Natural killer cell (primary cell): ENCODE measurements at regions of chr9 and their contacts with region 1.

Region 1: DNA sequence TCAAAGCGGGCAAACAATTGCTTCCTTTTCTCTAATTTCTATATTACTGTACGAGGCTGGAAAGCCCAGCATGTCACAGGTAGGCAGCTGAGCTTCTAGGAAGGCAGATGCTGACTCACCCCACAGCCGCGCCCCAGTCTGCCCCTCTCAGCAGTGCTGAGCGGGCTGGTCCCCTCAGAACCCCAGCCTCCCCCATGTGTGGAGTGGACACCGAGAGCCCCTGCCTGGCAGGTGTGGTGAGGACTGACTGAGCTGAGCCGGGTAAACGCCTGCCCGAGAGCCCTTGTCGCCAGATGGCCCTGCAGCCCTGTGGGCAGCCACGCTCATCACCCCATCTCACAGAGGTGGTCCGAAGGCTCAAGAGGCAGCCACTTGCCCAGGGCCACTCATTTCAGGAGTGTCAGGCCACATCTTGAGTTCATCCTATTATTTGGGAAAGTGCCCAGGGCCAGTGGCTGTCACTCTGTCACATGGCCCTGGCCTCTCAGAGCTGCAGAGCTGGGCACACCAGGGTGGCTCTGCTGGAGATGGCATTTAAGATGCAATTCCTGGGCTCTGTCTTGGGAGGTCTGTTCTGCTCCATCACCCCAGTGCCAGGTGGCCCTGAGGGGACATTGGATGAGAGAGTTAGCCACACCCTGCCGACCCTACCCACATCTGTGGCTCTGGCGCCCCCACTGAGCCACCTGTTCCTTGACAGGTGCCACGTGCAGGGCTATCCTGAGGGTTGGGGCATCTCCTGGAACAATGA is 12.4 kb downstream of the CARD19 start:
- DNase-seq: no peak
- ATAC-seq: no peak
- H3K4me3 ChIP-seq: no peak overlapping the region
- H3K4me3 Mint-ChIP-seq: no peak overlapping the region
- H3K27ac ChIP-seq: no peak overlapping the region
- H3K27ac Mint-ChIP-seq: peak overlapping the region in 1 of 2 donors; percentile 49
- H3K4me1 ChIP-seq: peaks cover 49% of the 10 kb centered on the region
- H3K4me1 Mint-ChIP-seq: peaks cover 6 to 11% of the 10 kb centered on the region in 2 donors
- H3K27me3 ChIP-seq: no peaks in the 10 kb centered on the region
- H3K27me3 Mint-ChIP-seq: no peaks in the 10 kb centered on the region
- CTCF ChIP-seq: no peak

Region 2: DNA sequence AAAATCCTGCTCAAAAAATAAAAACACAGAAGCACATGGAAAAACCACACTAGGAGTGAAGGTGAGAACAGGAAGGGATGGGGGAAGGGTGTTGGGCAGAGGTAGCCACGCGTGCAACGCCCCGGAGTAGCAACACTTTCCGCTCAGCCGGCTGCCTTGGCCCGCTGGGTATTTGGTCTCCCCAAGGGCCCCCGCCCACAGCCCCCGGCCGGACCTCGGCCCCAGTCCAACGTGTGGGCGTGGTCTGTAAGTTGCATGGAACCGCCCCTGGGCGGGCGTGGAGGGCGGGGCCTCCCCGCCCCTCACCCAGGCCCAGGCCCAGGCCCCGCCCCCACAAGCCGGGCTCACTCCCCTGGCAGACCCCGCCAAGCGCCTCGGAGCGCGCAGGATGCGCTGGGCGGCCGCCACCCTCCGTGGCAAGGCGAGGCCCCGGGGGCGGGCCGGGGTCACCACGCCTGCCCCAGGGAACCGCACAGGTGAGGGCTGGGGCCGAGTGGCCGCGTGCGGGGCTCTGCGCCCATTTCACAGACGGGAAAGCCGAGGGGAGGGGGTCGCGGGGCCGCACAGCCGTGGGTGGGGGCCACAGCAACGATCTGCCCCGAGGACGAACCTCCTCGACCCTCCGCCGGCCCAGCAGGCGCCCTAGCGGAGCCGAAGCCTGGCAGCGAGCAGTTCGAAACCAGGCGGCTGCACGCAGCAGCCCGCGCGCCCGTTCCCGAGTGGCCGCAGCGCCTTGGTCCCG is 49.9 kb before region 1 on chr9 and contains the start of gene SUSD3:
- intact Hi-C with region 1: no loop called
- DNase-seq: peak in 1 of 2 donors; percentile 81
- ATAC-seq: peak; percentile 57 to 68 (median 67)
- H3K4me3 ChIP-seq: peak within 1 kb of the TSS; percentile 47
- H3K4me3 Mint-ChIP-seq: peak within 1 kb of the TSS; percentile 86
- H3K27ac ChIP-seq: peak within 1 kb of the TSS; percentile 58
- H3K27ac Mint-ChIP-seq: peak within 1 kb of the TSS; percentile 29 to 71
- H3K4me1 ChIP-seq: peaks cover 61% of the 10 kb centered on the region
- H3K4me1 Mint-ChIP-seq: peaks cover 26 to 53% of the 10 kb centered on the region in 2 donors
- H3K27me3 ChIP-seq: peaks cover 12% of the 10 kb centered on the region
- H3K27me3 Mint-ChIP-seq: peaks cover 24 to 30% of the 10 kb centered on the region in 2 donors
- CTCF ChIP-seq: no peak
- total RNA-seq, gene SUSD3: 1.2 to 2.1 (median 1.8) TPM

Region 3: DNA sequence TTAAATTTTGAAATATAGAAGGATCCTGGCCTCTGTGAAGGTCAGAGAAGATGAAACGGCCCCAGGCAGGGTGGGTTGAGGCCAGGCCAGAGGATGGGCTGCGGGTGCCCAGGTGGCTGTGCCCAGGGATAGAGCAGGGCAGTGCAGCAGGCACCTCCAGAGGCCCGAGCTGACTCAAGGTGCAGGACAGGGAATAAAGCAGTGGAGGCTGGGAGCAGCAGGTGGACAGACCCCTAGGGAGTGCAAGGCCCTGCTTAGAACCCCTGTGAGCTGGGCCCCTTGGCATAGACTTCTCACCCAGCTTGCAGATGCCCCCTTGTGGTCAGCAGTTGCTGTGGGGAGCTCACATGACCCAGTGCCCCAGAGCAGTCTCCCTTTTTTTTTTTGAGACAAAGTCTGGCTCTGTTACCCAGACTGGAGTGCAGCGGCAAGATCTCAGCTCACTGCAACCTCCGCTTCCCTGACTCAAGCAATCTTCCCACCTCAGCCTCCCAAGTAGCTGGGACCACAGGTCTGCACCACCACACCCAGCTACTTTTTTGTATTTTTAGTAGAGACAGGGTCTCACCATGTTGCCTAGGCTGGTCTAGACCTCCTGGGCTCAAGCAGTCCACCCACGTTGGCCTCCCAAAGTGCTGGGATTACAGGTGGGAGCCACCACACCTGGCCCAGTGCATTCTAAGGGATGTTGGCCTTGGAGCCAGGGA is 194.2 kb after region 1 on chr9:
- intact Hi-C with region 1: loop called (anchors 1 kb)
- DNase-seq: peak in 1 of 2 donors; percentile 81
- ATAC-seq: peak; percentile 58 to 78 (median 65)
- H3K4me3 ChIP-seq: no peak overlapping the region
- H3K4me3 Mint-ChIP-seq: no peak overlapping the region
- H3K27ac ChIP-seq: no peak overlapping the region
- H3K27ac Mint-ChIP-seq: no peak overlapping the region
- H3K4me1 ChIP-seq: peaks cover 5% of the 10 kb centered on the region
- H3K4me1 Mint-ChIP-seq: peaks cover 0 to 9% of the 10 kb centered on the region in 2 donors
- H3K27me3 ChIP-seq: peaks cover 2% of the 10 kb centered on the region
- H3K27me3 Mint-ChIP-seq: peaks cover 30 to 45% of the 10 kb centered on the region in 2 donors
- CTCF ChIP-seq: peak; percentile 41